HepG2 (cell line): ENCODE measurements at regions of chr2 and their contacts with region 1.

Region 1: DNA sequence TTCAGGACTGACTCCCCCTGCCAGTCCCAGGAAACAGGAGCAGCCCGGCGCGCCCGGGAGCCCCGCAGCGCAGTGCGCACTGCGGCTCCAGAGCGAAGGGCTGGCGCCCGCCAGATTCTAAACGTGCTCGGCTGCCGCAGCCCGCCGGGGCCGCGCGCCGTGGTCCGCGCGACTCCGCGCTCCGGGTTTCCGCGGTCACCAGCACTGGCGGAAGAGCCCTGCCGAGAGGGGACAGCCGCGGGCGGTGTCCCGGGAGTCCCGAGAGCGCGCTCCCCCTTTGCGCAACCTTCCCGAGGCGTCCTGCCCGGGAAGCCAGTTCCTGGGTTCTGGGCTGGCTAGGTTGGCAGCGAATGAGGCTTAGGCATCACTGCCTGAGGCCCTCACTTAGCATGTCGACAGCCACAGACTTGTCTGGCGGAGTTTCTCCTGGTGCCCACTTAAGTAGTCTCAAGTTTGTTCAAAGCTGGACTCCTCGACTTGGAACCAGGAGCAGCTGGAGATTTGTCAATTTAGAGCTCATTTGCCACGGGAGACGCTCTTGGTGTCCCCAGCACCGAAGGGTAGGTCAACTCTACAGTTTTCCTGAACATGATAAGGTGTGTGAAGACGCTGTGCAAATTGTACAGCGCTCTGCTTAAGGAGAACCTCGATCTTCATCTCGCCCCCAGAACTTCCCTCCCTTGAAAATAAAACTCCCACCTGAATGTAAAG is 1.5 kb upstream of the VSNL1 start:
- DNase-seq: peak; percentile 83
- ATAC-seq: peak; percentile 80
- H3K4me3 ChIP-seq: peak overlapping the region; percentile 78 to 97 (median 83)
- H3K27ac ChIP-seq: peak overlapping the region; percentile 94
- H3K4me1 ChIP-seq: peaks cover 31% of the 10 kb centered on the region
- H3K27me3 ChIP-seq: peaks cover 0 to 3% of the 10 kb centered on the region in 2 experiments; a peak in 1 of 5 replicates
- CTCF ChIP-seq: peak; percentile 48
- EP300 ChIP-seq: 0 out of 4 replicates have a peak, but pooled peaks of 1 of the 2 experiments have one; percentile 18
- POLR2A ChIP-seq: peak; percentile 77 to 88
- RAD21 ChIP-seq: peak; percentile 82

Region 2: GRCh38 chr2:17460371-17461086 is 78.5 kb before region 1 on chr2:
- CTCF ChIA-PET with region 1: no interaction called
- POLR2A ChIA-PET with region 1: no interaction called
- in situ Hi-C with region 1: no loop called
- intact Hi-C with region 1: no loop called
- DNase-seq: no peak
- ATAC-seq: peak; percentile 57; the same call in 2 of the 3 replicates
- H3K4me3 ChIP-seq: no peak overlapping the region
- H3K27ac ChIP-seq: no peak overlapping the region
- H3K4me1 ChIP-seq: peaks cover 28% of the 10 kb centered on the region
- H3K27me3 ChIP-seq: no peaks in the 10 kb centered on the region
- CTCF ChIP-seq: no peak
- EP300 ChIP-seq: no peak; a peak in 1 of 4 replicates
- POLR2A ChIP-seq: no peak
- RAD21 ChIP-seq: no peak

Region 3: GRCh38 chr2:17470855-17471641 is 68.0 kb before region 1 on chr2:
- CTCF ChIA-PET with region 1: no interaction called
- POLR2A ChIA-PET with region 1: interaction called, 6 read pairs
- in situ Hi-C with region 1: no loop called
- intact Hi-C with region 1: loop called (anchors 1 kb)
- DNase-seq: peak; percentile 71
- ATAC-seq: peak; percentile 99
- H3K4me3 ChIP-seq: no peak overlapping the region
- H3K27ac ChIP-seq: no peak overlapping the region
- H3K4me1 ChIP-seq: peaks cover 6% of the 10 kb centered on the region; the same call in 1 of the 2 replicates
- H3K27me3 ChIP-seq: no peaks in the 10 kb centered on the region
- CTCF ChIP-seq: peak; percentile 88
- EP300 ChIP-seq: no peak
- POLR2A ChIP-seq: no peak
- RAD21 ChIP-seq: peak; percentile 87

Region 4: GRCh38 chr2:17518212-17519154 is 20.5 kb before region 1 on chr2 and contains the start of gene RAD51AP2:
- CTCF ChIA-PET with region 1: no interaction called
- POLR2A ChIA-PET with region 1: interaction called, 7 read pairs
- in situ Hi-C with region 1: no loop called
- intact Hi-C with region 1: loop called (anchors 1 kb)
- DNase-seq: peak; percentile 60
- ATAC-seq: peak; percentile 96
- H3K4me3 ChIP-seq: peak within 1 kb of the TSS; percentile 48 to 77 (median 75)
- H3K27ac ChIP-seq: no peak within 1 kb of the TSS
- H3K4me1 ChIP-seq: peaks cover 15% of the 10 kb centered on the region
- H3K27me3 ChIP-seq: peaks cover 0 to 14% of the 10 kb centered on the region in 2 experiments; a peak in 1 of 5 replicates
- CTCF ChIP-seq: no peak
- EP300 ChIP-seq: no peak
- POLR2A ChIP-seq: no peak
- RAD21 ChIP-seq: no peak
- total RNA-seq, gene RAD51AP2: 0.07 and 0.11 TPM in 2 replicates

Region 5: GRCh38 chr2:17557596-17557995 is 18.6 kb after region 1 on chr2:
- CTCF ChIA-PET with region 1: no interaction called
- POLR2A ChIA-PET with region 1: interaction called, 12 read pairs
- in situ Hi-C with region 1: no loop called
- intact Hi-C with region 1: loop called (anchors 1 kb)
- DNase-seq: peak; percentile 61
- ATAC-seq: peak; percentile 80
- H3K4me3 ChIP-seq: no peak overlapping the region; a peak in 1 of 6 replicates
- H3K27ac ChIP-seq: peak overlapping the region; percentile 45
- H3K4me1 ChIP-seq: peaks cover 63% of the 10 kb centered on the region
- H3K27me3 ChIP-seq: no peaks in the 10 kb centered on the region
- CTCF ChIP-seq: no peak
- EP300 ChIP-seq: no peak
- POLR2A ChIP-seq: no peak
- RAD21 ChIP-seq: no peak

Region 6: DNA sequence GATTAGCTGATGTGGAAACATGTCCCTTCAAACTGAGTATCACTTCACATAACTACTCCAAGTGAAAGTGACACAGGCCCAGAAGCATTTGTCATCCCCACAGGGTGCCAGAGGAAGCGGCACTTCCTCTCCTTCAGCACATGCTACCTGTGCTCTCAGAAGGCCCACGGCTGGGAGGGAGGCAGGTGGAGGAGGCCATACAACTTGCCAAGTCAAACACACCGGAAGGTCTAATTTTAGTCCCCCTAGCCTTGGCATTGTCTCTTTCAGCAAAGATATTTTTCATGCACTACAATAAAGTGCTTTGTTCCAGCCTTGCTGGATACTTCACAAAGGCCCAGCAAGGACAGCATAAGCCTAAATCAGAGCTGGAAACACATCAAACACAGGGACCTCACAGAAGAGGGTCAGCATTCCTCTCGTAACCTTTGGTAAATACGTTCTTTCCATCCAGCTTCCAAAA is 39.5 kb after region 1 on chr2:
- CTCF ChIA-PET with region 1: no interaction called
- POLR2A ChIA-PET with region 1: interaction called, 19 read pairs
- in situ Hi-C with region 1: no loop called
- intact Hi-C with region 1: loop called (anchors 1 kb)
- DNase-seq: peak; percentile 96
- ATAC-seq: peak; percentile 91
- H3K4me3 ChIP-seq: no peak overlapping the region; a peak in 1 of 6 replicates
- H3K27ac ChIP-seq: peak overlapping the region; percentile 51
- H3K4me1 ChIP-seq: peaks cover 66% of the 10 kb centered on the region
- H3K27me3 ChIP-seq: no peaks in the 10 kb centered on the region
- CTCF ChIP-seq: no peak
- EP300 ChIP-seq: peak in 1 of 2 experiments; percentile 74; a peak in 2 of 4 replicates
- POLR2A ChIP-seq: no peak
- RAD21 ChIP-seq: no peak

Region 7: GRCh38 chr2:17646081-17646554 is 107.1 kb after region 1 on chr2:
- CTCF ChIA-PET with region 1: no interaction called
- POLR2A ChIA-PET with region 1: interaction called, 6 read pairs
- in situ Hi-C with region 1: loop called (anchors 5 kb)
- intact Hi-C with region 1: loop called (anchors 1 kb)
- DNase-seq: peak; percentile 83
- ATAC-seq: peak; percentile 72
- H3K4me3 ChIP-seq: no peak overlapping the region
- H3K27ac ChIP-seq: peak overlapping the region; percentile 11
- H3K4me1 ChIP-seq: peaks cover 33% of the 10 kb centered on the region
- H3K27me3 ChIP-seq: no peaks in the 10 kb centered on the region
- CTCF ChIP-seq: peak; percentile 82
- EP300 ChIP-seq: peak in 1 of 2 experiments; percentile 16; a peak in 1 of 4 replicates
- POLR2A ChIP-seq: no peak
- RAD21 ChIP-seq: peak; percentile 56; the same call in 1 of the 2 replicates

Region 8: GRCh38 chr2:17753803-17754663 is 215.0 kb after region 1 on chr2 and contains the starts of genes GEN1 and SMC6:
- CTCF ChIA-PET with region 1: no interaction called
- POLR2A ChIA-PET with region 1: interaction called, 5 read pairs
- in situ Hi-C with region 1: loop called (anchors 10 kb)
- intact Hi-C with region 1: loop called (anchors 5 kb)
- DNase-seq: peak; percentile 92
- ATAC-seq: peak; percentile 88
- H3K4me3 ChIP-seq: peak within 1 kb of the TSS; percentile 82 to 95 (median 93)
- H3K27ac ChIP-seq: peak within 1 kb of the TSS; percentile 99
- H3K4me1 ChIP-seq: peaks cover 54% of the 10 kb centered on the region
- H3K27me3 ChIP-seq: no peaks in the 10 kb centered on the region; a peak in 1 of 5 replicates
- CTCF ChIP-seq: no peak
- EP300 ChIP-seq: peak in 1 of 2 experiments; percentile 16; a peak in 1 of 4 replicates
- POLR2A ChIP-seq: peak; percentile 15 to 45; a peak in 3 of 4 replicates
- RAD21 ChIP-seq: peak; percentile 30
- total RNA-seq, gene GEN1: 26.6 and 27.1 TPM in 2 replicates
- total RNA-seq, gene SMC6: 55.3 and 69.4 TPM in 2 replicates